ENCODE measurements at regions of chr9 and their contacts with region 1.

Region 1: DNA sequence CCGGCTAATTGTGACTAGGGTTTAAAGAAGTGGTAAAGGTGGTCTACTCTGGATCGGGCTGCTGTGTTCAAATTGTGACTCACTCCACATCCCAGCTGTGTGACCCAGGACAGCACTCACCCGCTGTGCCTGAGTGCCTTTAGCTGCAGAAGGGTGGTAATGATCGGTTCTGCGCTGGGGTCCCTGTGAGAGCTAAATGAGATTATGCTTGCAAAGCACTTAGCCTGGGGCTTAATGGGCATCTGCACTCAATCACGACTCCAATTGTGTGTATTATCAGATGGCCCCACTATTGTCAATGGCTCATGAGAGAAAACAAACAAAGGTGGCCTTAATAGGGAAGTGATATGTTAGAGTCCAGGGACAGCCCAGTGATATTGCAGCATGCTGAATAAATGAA is 25.1 kb upstream of the TBC1D2 start:
- DNase-seq: no peak
- H3K4me3 ChIP-seq: no peak overlapping the region
- H3K27ac ChIP-seq: no peak overlapping the region
- H3K4me1 ChIP-seq: no peaks in the 10 kb centered on the region
- H3K27me3 ChIP-seq: peaks cover 27% of the 10 kb centered on the region
- CTCF ChIP-seq: no peak
- EP300 ChIP-seq: no peak
- POLR2A ChIP-seq: no peak

Region 2: DNA sequence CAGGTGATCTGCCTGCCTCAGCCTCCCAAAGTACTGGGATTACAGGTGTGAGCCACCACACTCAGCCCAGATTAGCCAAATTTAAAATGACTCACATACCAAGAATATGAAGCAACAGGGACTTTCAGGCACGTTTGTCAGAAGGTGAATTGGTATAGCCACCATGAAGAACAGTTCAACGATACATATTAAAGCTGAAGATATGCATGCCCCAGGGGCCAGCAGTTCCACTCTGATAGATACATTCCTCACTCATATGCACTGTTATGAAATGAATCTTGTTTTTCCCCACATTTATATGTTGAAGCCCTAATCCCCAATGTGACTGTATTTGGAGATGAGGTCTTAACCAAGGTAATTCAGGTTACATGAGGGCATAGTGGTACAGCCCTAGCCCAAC is 1919.6 kb before region 1 on chr9:
- in situ Hi-C with region 1: no loop called
- intact Hi-C with region 1: no loop called
- DNase-seq: no peak
- H3K4me3 ChIP-seq: no peak overlapping the region
- H3K27ac ChIP-seq: no peak overlapping the region
- H3K4me1 ChIP-seq: peaks cover 0 to 4% (median 0%) of the 10 kb centered on the region in 4 donors
- H3K27me3 ChIP-seq: no peaks in the 10 kb centered on the region
- CTCF ChIP-seq: no peak
- EP300 ChIP-seq: no peak
- POLR2A ChIP-seq: no peak

Region 3: DNA sequence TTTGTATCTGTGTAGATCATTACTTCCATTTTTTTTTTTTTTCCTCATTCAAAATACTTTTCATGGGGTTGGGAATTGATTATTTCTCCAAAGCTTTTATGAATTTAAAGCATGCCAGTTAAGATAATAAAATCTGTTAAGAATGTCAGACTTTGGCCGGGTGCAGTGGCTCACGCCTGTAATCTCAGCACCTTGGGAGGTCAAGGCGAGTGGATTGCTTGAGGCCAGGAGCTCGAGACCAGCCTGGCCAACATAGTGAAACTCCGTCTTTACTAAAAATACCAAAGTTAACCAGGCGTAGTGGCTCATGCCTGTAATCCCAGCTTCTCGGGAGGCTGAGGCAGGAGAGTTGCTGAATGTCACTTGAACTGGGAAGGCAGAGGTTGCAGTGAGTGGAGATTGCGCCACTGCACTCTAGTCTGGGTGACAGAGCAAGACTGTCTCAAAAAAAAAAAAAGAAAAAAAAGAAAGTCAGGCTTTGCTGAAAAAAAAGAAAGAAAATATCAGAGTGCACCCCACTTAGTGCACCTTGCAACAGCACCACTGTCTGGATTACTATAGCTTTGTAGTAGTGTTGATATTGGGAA is 43.6 kb before region 1 on chr9:
- in situ Hi-C with region 1: no loop called
- intact Hi-C with region 1: loop called (anchors 5 kb)
- DNase-seq: peak; percentile 67
- H3K4me3 ChIP-seq: no peak overlapping the region
- H3K27ac ChIP-seq: peak overlapping the region in 3 of 4 donors; percentile 31 to 54 (median 53)
- H3K4me1 ChIP-seq: peaks cover 0 to 28% (median 6%) of the 10 kb centered on the region in 4 donors
- H3K27me3 ChIP-seq: no peaks in the 10 kb centered on the region
- CTCF ChIP-seq: no peak
- EP300 ChIP-seq: no peak
- POLR2A ChIP-seq: no peak

Measured in transverse colon (tissue), 4 donors.